Calu3 (cell line): ENCODE measurements at regions of chr19 and their contacts with region 1.

Region 1: DNA sequence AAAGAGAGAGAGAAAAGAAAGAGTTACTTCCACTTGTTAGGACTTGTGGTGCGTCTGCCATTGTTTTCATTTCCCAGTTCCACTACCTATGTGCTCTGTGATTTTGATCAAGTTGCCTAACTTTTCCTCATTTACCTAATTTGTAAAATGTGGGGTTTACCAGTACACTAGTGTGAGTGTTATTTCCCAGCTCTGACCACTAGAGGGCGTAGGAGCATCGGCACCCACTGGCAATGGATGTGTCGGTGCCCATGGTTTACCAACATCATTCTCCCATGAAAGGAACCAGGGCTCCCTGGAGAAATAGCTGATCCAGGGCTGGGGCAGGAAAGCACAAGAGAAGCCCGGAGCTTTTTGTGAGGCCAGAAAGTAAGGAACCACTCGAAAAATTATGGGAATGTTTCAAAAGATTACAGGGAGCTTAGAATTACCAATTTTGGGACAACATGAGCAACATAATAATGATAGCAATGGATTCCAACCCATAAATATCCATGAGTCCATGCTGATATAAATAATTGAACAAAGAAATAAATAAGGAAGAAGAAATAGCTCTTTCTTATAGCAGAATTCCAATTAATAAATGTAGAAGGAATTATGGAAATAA is 15.1 kb upstream of the CEACAM4 start:
- DNase-seq: peak; percentile 88
- H3K4me3 Mint-ChIP-seq: no peak overlapping the region
- H3K27ac Mint-ChIP-seq: no peak overlapping the region
- H3K4me1 Mint-ChIP-seq: no peaks in the 10 kb centered on the region
- H3K27me3 Mint-ChIP-seq: peaks cover 61% of the 10 kb centered on the region
- CTCF ChIP-seq: peak; percentile 95

Region 2: GRCh38 chr19:41691268-41691970 is 49.4 kb after region 1 on chr19:
- CTCF ChIA-PET with region 1: interaction called, 56 read pairs
- intact Hi-C with region 1: loop called (anchors 5 kb)
- DNase-seq: peak; percentile 77
- H3K4me3 Mint-ChIP-seq: no peak overlapping the region
- H3K27ac Mint-ChIP-seq: no peak overlapping the region
- H3K4me1 Mint-ChIP-seq: peaks cover 30% of the 10 kb centered on the region
- H3K27me3 Mint-ChIP-seq: peaks cover 36% of the 10 kb centered on the region
- CTCF ChIP-seq: peak; percentile 88

Region 3: DNA sequence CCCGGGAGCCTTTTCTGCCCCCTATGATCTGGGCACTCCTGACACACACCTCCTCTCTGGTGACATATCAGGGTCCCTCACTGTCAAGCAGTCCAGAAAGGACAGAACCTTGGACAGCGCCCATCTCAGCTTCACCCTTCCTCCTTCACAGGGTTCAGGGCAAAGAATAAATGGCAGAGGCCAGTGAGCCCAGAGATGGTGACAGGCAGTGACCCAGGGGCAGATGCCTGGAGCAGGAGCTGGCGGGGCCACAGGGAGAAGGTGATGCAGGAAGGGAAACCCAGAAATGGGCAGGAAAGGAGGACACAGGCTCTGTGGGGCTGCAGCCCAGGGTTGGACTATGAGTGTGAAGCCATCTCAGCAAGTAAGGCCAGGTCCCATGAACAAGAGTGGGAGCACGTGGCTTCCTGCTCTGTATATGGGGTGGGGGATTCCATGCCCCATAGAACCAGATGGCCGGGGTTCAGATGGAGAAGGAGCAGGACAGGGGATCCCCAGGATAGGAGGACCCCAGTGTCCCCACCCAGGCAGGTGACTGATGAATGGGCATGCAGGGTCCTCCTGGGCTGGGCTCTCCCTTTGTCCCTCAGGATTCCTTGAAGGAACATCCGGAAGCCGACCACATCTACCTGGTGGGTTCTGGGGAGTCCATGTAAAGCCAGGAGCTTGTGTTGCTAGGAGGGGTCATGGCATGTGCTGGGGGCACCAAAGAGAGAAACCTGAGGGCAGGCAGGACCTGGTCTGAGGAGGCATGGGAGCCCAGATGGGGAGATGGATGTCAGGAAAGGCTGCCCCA is 54.6 kb after region 1 on chr19:
- CTCF ChIA-PET with region 1: interaction called, 56 read pairs
- intact Hi-C with region 1: loop called (anchors 5 kb)
- DNase-seq: peak; percentile 46
- H3K4me3 Mint-ChIP-seq: no peak overlapping the region
- H3K27ac Mint-ChIP-seq: no peak overlapping the region
- H3K4me1 Mint-ChIP-seq: peaks cover 30% of the 10 kb centered on the region
- H3K27me3 Mint-ChIP-seq: peaks cover 18% of the 10 kb centered on the region
- CTCF ChIP-seq: no peak